Sigmoid colon (tissue), 7 donors: ENCODE measurements at regions of chr9 and their contacts with region 1.

Region 1: GRCh38 chr9:112074250-112075008 is 100.7 kb downstream of the SUSD1 start:
- DNase-seq: peak; percentile 79
- H3K4me3 ChIP-seq: peak overlapping the region in 2 of 4 donors; percentile 5 to 26
- H3K27ac ChIP-seq: peak overlapping the region; percentile 72 to 93 (median 82)
- H3K4me1 ChIP-seq: peaks cover 0 to 37% (median 30%) of the 10 kb centered on the region in 4 donors
- H3K27me3 ChIP-seq: no peaks in the 10 kb centered on the region
- CTCF ChIP-seq: peak; percentile 83 to 95 (median 91)
- EP300 ChIP-seq: peak; percentile 74 to 99 (median 96)
- POLR2A ChIP-seq: no peak

Region 2: DNA sequence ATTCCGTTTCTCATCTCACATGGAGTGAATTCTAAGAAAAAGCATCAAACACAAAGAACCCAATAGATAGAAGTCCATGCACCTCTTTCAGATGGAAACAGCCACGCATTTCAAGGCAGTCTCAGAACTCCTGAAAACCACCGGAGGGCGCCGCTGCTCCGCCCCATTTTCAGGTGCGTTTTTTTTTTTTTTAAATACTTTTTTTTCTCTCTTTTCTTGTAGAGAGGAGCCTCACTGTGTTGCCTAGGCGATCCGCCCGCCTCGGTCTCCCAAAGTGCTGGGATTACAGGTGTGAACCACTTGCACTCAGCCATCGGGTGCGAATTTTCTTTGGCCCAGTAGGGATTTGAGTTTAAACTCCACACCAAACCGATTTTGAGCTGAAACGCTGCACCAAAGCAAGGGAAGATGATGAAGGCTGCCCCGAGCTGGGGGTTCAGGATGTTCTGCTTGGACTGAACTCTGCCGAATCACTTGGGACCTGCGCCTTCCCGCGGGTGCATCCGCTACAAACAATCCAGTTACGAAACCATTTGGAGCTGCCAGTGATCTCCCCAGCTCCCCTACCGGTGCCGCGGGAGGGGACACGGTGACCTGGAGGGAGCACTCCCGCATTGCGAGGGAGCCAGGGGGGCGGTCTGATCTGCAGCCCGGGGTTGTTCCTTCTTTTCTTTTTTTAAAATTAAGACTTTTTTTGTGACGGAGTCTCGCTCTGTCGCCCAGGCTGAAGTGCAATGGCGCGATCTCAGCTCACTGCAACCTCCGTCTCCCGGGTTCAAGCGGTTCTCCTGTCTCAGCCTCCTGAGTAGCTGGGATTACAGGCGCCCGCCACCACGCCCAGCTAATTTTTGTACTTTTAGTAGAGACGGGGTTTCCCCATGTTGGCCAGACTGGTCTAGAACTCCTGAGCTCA is 476.4 kb before region 1 on chr9:
- intact Hi-C with region 1: loop called (anchors 2 kb)
- DNase-seq: peak; percentile 89
- H3K4me3 ChIP-seq: peak overlapping the region; percentile 62 to 80 (median 65)
- H3K27ac ChIP-seq: peak overlapping the region; percentile 84 to 89 (median 87)
- H3K4me1 ChIP-seq: peaks cover 0 to 24% (median 5%) of the 10 kb centered on the region in 4 donors
- H3K27me3 ChIP-seq: no peaks in the 10 kb centered on the region
- CTCF ChIP-seq: peak; percentile 3 to 58 (median 29)
- EP300 ChIP-seq: no peak
- POLR2A ChIP-seq: no peak

Region 3: GRCh38 chr9:111759762-111760639 is 314.4 kb before region 1 on chr9:
- intact Hi-C with region 1: loop called (anchors 1 kb)
- DNase-seq: no peak
- H3K4me3 ChIP-seq: no peak overlapping the region
- H3K27ac ChIP-seq: peak overlapping the region in 1 of 4 donors; percentile 11
- H3K4me1 ChIP-seq: peaks cover 0 to 11% (median 1%) of the 10 kb centered on the region in 4 donors
- H3K27me3 ChIP-seq: no peaks in the 10 kb centered on the region
- CTCF ChIP-seq: peak; percentile 31 to 73 (median 62)
- EP300 ChIP-seq: no peak
- POLR2A ChIP-seq: no peak

Region 4: DNA sequence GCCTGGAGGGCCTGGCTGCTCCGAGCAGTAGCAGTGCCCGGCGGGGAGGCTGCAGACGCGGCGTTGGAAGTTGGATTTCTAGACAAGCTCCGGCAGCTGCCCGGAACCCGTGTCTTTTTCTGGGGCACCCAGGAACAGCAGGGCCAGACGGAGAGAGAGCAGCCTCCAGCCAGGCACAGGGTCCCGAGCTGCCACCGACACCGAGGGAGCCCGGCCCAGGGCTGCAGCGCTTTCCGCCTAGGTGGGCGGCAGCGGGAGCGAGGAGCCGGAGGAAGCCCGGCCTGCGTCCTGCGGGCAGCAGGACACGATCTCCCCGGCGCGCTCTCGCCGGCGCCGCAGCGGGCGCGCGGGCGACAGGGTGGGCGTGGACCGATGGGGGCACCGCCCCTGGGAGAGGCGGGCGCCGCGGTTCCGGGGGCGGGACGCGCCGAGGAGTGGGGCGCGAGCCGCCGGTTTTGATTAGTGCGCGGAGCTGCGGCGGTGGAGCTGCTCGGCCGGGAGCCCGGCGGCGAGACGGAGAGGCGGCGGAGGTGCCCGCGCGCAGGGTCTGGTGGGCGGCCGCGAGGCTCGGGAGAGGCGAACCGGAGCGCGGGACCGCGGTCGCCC is 178.0 kb before region 1 on chr9 and contains the start of gene UGCG:
- intact Hi-C with region 1: loop called (anchors 1 kb)
- DNase-seq: peak; percentile 91
- H3K4me3 ChIP-seq: peak within 1 kb of the TSS; percentile 87 to 97 (median 96)
- H3K27ac ChIP-seq: peak within 1 kb of the TSS; percentile 96 to 99 (median 98)
- H3K4me1 ChIP-seq: peaks cover 0 to 43% (median 38%) of the 10 kb centered on the region in 4 donors
- H3K27me3 ChIP-seq: no peaks in the 10 kb centered on the region
- CTCF ChIP-seq: no peak
- EP300 ChIP-seq: no peak
- POLR2A ChIP-seq: peak; percentile 77 to 84
- total RNA-seq, gene UGCG: 18.6 to 89.3 (median 27.0) TPM

Region 5: DNA sequence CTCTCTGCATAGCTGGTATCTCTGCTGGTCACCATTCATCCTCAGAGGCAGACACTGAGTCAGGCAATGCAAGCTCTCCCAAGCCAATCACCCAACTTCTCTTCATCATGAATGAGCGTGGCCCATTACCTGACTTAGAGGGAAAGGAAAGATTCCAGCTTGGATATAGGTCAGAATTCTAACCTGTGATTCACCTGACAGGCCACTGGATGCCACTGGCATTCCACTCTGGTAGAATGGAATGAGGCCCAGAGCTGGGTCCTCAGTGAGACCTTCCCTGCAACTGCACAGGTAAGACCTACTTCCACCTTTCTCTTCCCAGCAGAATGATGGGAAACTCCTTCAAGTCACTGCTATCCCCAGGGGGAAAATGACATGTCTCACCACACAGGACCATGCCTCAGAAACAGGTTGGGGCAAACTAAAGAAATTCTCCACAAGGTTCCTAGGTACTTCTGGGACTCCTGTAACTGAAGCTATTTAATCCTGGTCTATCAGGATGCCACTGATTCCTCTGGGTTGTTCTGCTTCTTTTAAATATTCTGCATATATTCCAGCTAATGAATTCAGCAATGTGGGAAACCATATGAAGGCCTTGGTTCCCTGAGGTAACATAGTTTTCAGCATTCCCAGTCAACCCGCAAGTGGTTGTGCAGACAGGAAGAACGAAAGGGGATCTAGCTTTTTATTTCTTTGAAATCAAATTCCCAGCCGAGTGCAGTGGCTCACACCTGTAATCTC is 38.7 kb after region 1 on chr9:
- intact Hi-C with region 1: no loop called
- DNase-seq: no peak
- H3K4me3 ChIP-seq: no peak overlapping the region
- H3K27ac ChIP-seq: no peak overlapping the region
- H3K4me1 ChIP-seq: no peaks in the 10 kb centered on the region
- H3K27me3 ChIP-seq: no peaks in the 10 kb centered on the region
- CTCF ChIP-seq: peak in 1 of 4 experiments; percentile 16
- EP300 ChIP-seq: no peak
- POLR2A ChIP-seq: no peak